CD4-positive, alpha-beta T cell (primary cell): ENCODE measurements at regions of chr6 and their contacts with region 1.

Region 1: GRCh38 chr6:148144917-148145521 is 197.6 kb upstream of the SASH1 start:
- DNase-seq: peak; percentile 13 to 69 (median 34)
- ATAC-seq: no peak
- H3K4me3 ChIP-seq: no peak overlapping the region
- H3K4me3 Mint-ChIP-seq: no peak overlapping the region
- H3K27ac ChIP-seq: no peak overlapping the region
- H3K27ac Mint-ChIP-seq: no peak overlapping the region
- H3K4me1 ChIP-seq: peaks cover 7% of the 10 kb centered on the region
- H3K4me1 Mint-ChIP-seq: peaks cover 9% of the 10 kb centered on the region
- H3K27me3 ChIP-seq: peaks cover 0 to 3% of the 10 kb centered on the region in 2 experiments
- H3K27me3 Mint-ChIP-seq: peaks cover 13% of the 10 kb centered on the region
- CTCF ChIP-seq: peak; percentile 79

Region 2: DNA sequence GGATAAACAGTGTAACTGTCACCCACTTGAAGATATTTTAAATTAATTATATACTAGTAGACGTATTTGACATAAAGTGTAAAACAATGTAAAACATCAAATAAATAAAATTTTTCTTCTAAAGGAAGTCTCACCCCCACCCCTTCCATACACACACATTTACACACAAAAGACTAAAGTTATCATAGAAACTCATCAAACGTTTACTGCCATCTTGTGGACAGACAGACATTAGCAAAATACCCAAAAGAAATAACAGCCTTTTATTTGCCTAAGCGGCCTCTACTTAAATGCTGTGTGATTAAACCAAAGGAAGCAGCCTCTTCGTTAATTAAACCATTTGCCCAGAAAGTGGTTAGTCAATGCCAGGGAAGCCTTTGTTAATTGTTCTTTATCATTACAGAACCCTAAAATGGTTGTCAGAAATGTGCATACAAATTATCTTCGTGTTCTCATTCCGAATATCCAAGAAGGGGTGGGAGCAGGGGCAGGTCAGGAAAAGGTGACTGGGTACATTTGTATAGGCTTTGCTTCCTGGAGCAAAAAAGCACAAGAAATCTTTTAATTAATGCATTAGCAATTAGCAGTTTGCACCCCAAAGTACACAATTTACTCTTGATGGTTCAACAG is 21.4 kb after region 1 on chr6:
- CTCF ChIA-PET with region 1: no interaction called
- POLR2A ChIA-PET with region 1: no interaction called
- intact Hi-C with region 1: loop called in 1 of 2 experiments (anchors 2 kb)
- DNase-seq: peak in 3 of 14 experiments; percentile 40 to 56 (median 50)
- ATAC-seq: no peak
- H3K4me3 ChIP-seq: no peak overlapping the region
- H3K4me3 Mint-ChIP-seq: no peak overlapping the region
- H3K27ac ChIP-seq: no peak overlapping the region
- H3K27ac Mint-ChIP-seq: no peak overlapping the region
- H3K4me1 ChIP-seq: no peaks in the 10 kb centered on the region
- H3K4me1 Mint-ChIP-seq: no peaks in the 10 kb centered on the region
- H3K27me3 ChIP-seq: no peaks in the 10 kb centered on the region
- H3K27me3 Mint-ChIP-seq: peaks cover 19% of the 10 kb centered on the region
- CTCF ChIP-seq: peak; percentile 66

Region 3: DNA sequence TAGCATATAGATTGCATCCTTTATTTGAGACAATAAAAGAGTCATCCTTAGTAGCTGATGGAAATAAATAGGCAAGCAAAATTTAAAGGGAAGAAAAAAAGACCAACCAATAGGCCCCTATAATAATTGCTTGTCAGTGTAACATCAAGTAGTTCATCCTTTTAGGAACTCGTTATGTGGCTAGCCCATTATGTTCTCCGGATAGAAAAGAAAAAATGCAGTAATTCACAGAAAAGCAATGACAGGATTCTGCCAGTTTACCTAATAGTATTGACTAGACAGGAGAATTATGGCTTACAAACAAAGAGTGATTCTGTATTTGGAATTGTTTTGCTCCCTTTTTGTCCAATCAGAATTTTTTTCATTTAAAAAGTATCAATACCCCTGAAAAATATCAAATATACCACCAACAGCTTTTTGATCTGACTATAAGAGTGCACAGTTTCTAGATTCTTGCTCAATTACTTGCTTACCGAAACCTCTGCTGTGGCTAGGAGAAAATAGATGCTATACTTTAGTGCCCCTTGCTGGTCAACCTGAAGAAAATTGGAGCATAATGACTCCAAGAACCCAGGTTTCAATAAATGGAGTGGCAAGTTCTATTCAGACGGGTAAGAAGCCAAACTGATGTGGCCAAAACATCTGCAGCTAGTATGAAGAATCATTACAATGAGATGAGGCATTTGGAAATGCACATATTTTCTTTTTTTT is 106.1 kb after region 1 on chr6:
- CTCF ChIA-PET with region 1: no interaction called
- POLR2A ChIA-PET with region 1: no interaction called
- intact Hi-C with region 1: loop called in 1 of 2 experiments (anchors 1 kb)
- DNase-seq: peak in 3 of 14 experiments; percentile 21 to 39 (median 39)
- ATAC-seq: no peak
- H3K4me3 ChIP-seq: no peak overlapping the region
- H3K4me3 Mint-ChIP-seq: no peak overlapping the region
- H3K27ac ChIP-seq: no peak overlapping the region
- H3K27ac Mint-ChIP-seq: no peak overlapping the region
- H3K4me1 ChIP-seq: no peaks in the 10 kb centered on the region
- H3K4me1 Mint-ChIP-seq: no peaks in the 10 kb centered on the region
- H3K27me3 ChIP-seq: no peaks in the 10 kb centered on the region
- H3K27me3 Mint-ChIP-seq: peaks cover 30% of the 10 kb centered on the region
- CTCF ChIP-seq: peak; percentile 23

Region 4: DNA sequence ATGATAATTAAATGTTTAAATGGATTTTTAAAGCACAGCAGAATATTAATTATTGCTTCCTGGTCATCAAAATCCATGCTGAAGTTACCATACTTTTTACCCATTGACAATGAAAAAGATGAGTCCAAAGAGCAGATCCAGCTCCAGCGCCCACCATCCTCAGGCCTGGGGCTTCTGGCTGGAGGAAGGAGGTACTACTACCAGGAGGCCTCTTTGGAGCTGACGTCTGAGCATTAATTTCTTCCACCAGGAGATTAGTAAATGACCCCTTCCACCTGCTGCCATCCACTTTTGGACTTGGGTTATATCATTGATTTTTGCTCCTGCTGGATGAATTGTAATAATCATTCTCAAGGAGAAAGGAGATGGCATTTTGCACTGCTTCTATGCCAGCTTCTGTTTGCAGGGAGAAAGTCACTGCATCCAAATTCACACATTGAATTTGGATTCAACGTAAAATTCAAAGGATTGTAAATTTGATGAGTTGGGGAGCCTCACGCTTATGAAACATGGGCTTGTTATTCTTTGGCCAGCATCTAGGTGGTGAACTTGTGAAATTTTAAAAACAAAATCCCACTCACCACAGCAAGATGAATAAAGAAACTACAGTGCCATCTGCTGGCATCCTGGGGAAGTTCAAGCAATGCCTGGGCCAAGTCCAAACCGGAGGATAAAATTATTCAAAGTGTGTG is 319.4 kb after region 1 on chr6:
- CTCF ChIA-PET with region 1: no interaction called
- POLR2A ChIA-PET with region 1: no interaction called
- intact Hi-C with region 1: loop called in 1 of 2 experiments (anchors 10 kb)
- DNase-seq: peak in 13 of 14 experiments; percentile 19 to 68 (median 28)
- ATAC-seq: peak; percentile 49
- H3K4me3 ChIP-seq: no peak overlapping the region
- H3K4me3 Mint-ChIP-seq: no peak overlapping the region
- H3K27ac ChIP-seq: no peak overlapping the region
- H3K27ac Mint-ChIP-seq: no peak overlapping the region
- H3K4me1 ChIP-seq: peaks cover 3% of the 10 kb centered on the region
- H3K4me1 Mint-ChIP-seq: no peaks in the 10 kb centered on the region
- H3K27me3 ChIP-seq: peaks cover 0 to 5% of the 10 kb centered on the region in 2 experiments
- H3K27me3 Mint-ChIP-seq: peaks cover 27% of the 10 kb centered on the region
- CTCF ChIP-seq: peak; percentile 93

Region 5: GRCh38 chr6:148947621-148948444 is 802.8 kb after region 1 on chr6:
- CTCF ChIA-PET with region 1: no interaction called
- POLR2A ChIA-PET with region 1: no interaction called
- intact Hi-C with region 1: no loop called
- DNase-seq: peak; percentile 64 to 87 (median 73)
- ATAC-seq: peak; percentile 81
- H3K4me3 ChIP-seq: no peak overlapping the region
- H3K4me3 Mint-ChIP-seq: no peak overlapping the region
- H3K27ac ChIP-seq: no peak overlapping the region
- H3K27ac Mint-ChIP-seq: no peak overlapping the region
- H3K4me1 ChIP-seq: peaks cover 2% of the 10 kb centered on the region
- H3K4me1 Mint-ChIP-seq: no peaks in the 10 kb centered on the region
- H3K27me3 ChIP-seq: no peaks in the 10 kb centered on the region
- H3K27me3 Mint-ChIP-seq: peaks cover 4% of the 10 kb centered on the region
- CTCF ChIP-seq: peak; percentile 94